ENCODE measurements at regions of chr2 and their contacts with region 1.

Region 1: GRCh38 chr2:42238644-42239288 is 69.6 kb downstream of the EML4 start:
- DNase-seq: peak in 6 of 9 donors; percentile 22 to 42 (median 30)
- ATAC-seq: peak; percentile 75
- H3K4me3 ChIP-seq: no peak overlapping the region
- H3K4me3 Mint-ChIP-seq: peak overlapping the region in 1 of 10 donors; percentile 9
- H3K27ac ChIP-seq: no peak overlapping the region
- H3K27ac Mint-ChIP-seq: peak overlapping the region in 2 of 9 donors; percentile 43 to 65
- H3K4me1 ChIP-seq: peaks cover 32 to 33% of the 10 kb centered on the region in 2 donors
- H3K4me1 Mint-ChIP-seq: peaks cover 28 to 97% (median 89%) of the 10 kb centered on the region in 7 donors
- H3K27me3 ChIP-seq: no peaks in the 10 kb centered on the region
- H3K27me3 Mint-ChIP-seq: no peaks in the 10 kb centered on the region

Region 2: DNA sequence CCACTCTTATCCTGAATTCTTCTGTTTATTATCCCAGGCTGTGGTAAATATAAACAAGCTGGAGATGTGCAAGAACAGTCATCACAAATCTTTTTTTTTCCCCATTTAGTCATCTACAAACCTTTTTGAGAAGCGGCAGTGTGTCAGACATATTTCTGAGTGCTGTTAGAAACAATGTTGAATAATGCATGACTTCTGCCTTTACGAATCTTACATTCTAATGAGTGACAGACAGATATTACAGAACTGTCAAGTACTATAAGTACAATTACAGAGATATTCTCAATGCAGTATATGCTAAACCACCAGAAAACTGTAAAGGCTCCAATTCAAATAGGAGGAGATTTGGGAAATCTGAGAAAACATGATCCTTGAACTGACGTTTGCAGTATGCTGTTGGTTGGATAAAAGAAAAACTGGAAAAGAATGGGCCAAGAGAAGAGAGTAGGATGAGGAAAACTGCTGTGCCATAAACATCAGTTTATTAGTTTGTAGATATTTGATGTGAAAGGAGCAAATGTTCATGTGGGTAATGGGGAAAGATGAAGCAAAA is 1407.4 kb before region 1 on chr2:
- CTCF ChIA-PET with region 1: no interaction called
- POLR2A ChIA-PET with region 1: no interaction called
- intact Hi-C with region 1: no loop called
- DNase-seq: no peak
- ATAC-seq: no peak
- H3K4me3 ChIP-seq: no peak overlapping the region
- H3K4me3 Mint-ChIP-seq: no peak overlapping the region
- H3K27ac ChIP-seq: no peak overlapping the region
- H3K27ac Mint-ChIP-seq: no peak overlapping the region
- H3K4me1 ChIP-seq: no peaks in the 10 kb centered on the region
- H3K4me1 Mint-ChIP-seq: no peaks in the 10 kb centered on the region
- H3K27me3 ChIP-seq: no peaks in the 10 kb centered on the region
- H3K27me3 Mint-ChIP-seq: no peaks in the 10 kb centered on the region

Region 3: GRCh38 chr2:41933585-41934320 is 305.0 kb before region 1 on chr2:
- CTCF ChIA-PET with region 1: no interaction called
- POLR2A ChIA-PET with region 1: no interaction called
- intact Hi-C with region 1: no loop called
- DNase-seq: no peak
- ATAC-seq: no peak
- H3K4me3 ChIP-seq: no peak overlapping the region
- H3K4me3 Mint-ChIP-seq: no peak overlapping the region
- H3K27ac ChIP-seq: no peak overlapping the region
- H3K27ac Mint-ChIP-seq: no peak overlapping the region
- H3K4me1 ChIP-seq: no peaks in the 10 kb centered on the region
- H3K4me1 Mint-ChIP-seq: no peaks in the 10 kb centered on the region
- H3K27me3 ChIP-seq: no peaks in the 10 kb centered on the region
- H3K27me3 Mint-ChIP-seq: peaks cover 0 to 2% (median 0%) of the 10 kb centered on the region in 5 donors

Region 4: DNA sequence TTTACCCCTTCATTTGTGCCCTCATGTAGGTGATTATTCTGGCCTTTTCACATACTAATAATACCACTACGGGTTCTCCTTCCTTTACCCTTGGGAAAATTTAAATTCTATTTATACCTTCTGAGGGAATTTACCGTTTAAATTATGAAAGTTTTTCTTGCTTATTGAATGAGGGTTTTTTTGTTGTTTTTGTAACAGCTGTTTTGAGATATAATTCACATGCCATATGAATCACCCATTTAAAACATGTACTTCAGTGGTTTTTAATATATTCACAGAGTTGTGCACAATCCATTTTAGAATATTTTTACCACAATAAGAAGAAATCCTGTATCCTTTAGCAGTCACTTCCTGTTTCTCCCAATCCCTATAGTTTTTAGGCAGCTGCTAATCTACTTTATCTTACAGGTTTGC is 14.9 kb before region 1 on chr2:
- CTCF ChIA-PET with region 1: interaction called, 4 read pairs
- POLR2A ChIA-PET with region 1: no interaction called
- intact Hi-C with region 1: loop called in 1 of 2 experiments (anchors 2 kb)
- DNase-seq: no peak
- ATAC-seq: no peak
- H3K4me3 ChIP-seq: no peak overlapping the region
- H3K4me3 Mint-ChIP-seq: peak overlapping the region in 6 of 10 donors; percentile 6 to 31 (median 22)
- H3K27ac ChIP-seq: no peak overlapping the region
- H3K27ac Mint-ChIP-seq: peak overlapping the region in 1 of 9 donors; percentile 23
- H3K4me1 ChIP-seq: peaks cover 5 to 17% of the 10 kb centered on the region in 2 donors
- H3K4me1 Mint-ChIP-seq: peaks cover 35 to 94% (median 85%) of the 10 kb centered on the region in 7 donors
- H3K27me3 ChIP-seq: no peaks in the 10 kb centered on the region
- H3K27me3 Mint-ChIP-seq: no peaks in the 10 kb centered on the region

Region 5: GRCh38 chr2:42249887-42250286 is 11.1 kb after region 1 on chr2:
- CTCF ChIA-PET with region 1: interaction called, 4 read pairs
- POLR2A ChIA-PET with region 1: interaction called, 4 read pairs
- intact Hi-C with region 1: loop called in 1 of 2 experiments (anchors 1 kb)
- DNase-seq: no peak
- ATAC-seq: no peak
- H3K4me3 ChIP-seq: no peak overlapping the region
- H3K4me3 Mint-ChIP-seq: peak overlapping the region in 4 of 10 donors; percentile 5 to 10 (median 10)
- H3K27ac ChIP-seq: no peak overlapping the region
- H3K27ac Mint-ChIP-seq: peak overlapping the region in 5 of 9 donors; percentile 12 to 52 (median 15)
- H3K4me1 ChIP-seq: peaks cover 6 to 31% of the 10 kb centered on the region in 2 donors
- H3K4me1 Mint-ChIP-seq: peaks cover 35 to 82% (median 76%) of the 10 kb centered on the region in 7 donors
- H3K27me3 ChIP-seq: no peaks in the 10 kb centered on the region
- H3K27me3 Mint-ChIP-seq: no peaks in the 10 kb centered on the region